ENCODE measurements at regions of chr19 and their contacts with region 1.

Region 1: DNA sequence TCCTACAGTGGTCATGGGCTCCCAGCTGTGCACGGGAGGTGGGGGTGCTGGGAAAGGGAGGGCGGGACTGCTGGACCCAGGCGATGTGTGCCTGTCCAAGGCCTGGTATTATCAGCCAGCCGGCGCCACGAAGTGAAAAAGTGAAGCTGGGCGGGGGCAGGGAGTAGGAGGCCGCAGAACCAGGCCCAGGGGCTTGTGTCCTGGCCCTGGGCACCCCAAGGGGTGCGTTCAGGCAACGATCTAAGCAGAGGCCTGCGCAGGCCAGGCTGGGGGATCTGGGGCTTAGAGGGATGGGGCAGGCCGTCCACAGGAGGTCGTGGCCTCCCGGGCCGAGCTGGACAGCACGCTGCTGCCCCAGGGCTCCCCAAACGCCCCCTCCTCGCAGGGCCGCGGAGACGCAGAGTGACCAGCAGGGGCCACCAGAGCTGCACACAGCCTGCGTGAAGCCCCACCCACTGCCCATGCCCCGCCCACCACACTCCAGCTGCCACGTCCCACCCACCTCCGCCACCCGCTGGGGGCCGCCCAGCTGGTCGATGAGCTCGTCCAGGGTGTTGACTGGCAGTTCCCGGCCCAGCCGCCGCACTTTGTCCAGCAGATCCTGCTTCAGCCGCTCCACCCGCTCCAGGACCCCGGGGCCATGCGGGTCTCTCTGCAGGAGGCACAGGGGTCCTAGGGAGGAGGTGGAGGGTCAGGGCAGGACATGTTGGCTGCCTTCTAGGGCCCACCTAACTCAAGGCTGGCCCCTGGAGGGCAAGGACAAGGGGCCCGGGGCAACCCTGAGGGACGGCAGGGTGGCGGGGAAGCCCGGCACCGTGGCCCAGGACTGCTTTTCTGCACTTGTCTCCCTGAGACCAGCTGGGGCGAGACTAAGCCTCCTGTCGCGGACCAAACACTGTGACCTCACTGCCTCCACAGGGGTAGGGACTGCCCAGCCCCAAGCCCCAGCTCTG is 9.5 kb downstream of the GPX4 start:
- DNase-seq: peak; percentile 97 to 98
- H3K4me3 ChIP-seq: peak overlapping the region in 2 of 4 donors; percentile 5 to 29
- H3K27ac ChIP-seq: peak overlapping the region; percentile 25 to 87 (median 82)
- H3K4me1 ChIP-seq: peaks cover 24 to 37% (median 30%) of the 10 kb centered on the region in 4 donors
- H3K27me3 ChIP-seq: no peaks in the 10 kb centered on the region
- CTCF ChIP-seq: peak in 5 of 7 experiments; percentile 83 to 90 (median 86)
- EP300 ChIP-seq: no peak
- POLR2A ChIP-seq: no peak

Region 2: DNA sequence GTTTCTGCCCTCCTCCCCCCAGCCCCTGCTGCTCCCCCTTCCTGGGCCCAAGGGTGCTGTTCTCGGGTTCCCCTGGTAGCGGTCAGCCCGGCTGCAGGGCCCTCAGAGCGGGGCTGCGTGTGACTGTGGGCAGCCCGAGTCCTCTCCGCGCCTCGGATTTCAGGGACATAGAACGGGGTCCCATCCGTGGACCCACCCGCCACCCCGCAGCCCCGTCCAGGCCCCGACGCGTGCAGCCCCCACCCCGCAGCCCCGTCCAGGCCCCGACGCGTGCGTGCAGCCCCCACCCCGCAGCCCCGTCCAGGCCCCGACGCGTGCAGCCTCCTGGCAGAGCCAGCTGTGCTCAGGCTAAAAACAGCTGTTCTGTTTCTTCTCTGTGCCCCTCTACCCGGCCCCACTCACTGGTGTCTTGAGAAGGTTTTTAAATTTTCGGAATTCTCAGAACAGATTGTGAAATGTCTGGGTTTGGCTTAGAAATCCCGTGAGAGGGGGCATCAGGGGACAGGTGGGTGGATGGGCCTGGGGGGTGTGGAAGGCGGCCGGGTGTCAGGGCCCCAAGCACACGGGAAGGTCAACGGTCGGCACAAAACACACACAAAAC is 278.0 kb before region 1 on chr19:
- intact Hi-C with region 1: no loop called
- DNase-seq: no peak
- H3K4me3 ChIP-seq: no peak overlapping the region
- H3K27ac ChIP-seq: no peak overlapping the region
- H3K4me1 ChIP-seq: no peaks in the 10 kb centered on the region
- H3K27me3 ChIP-seq: peaks cover 0 to 82% (median 48%) of the 10 kb centered on the region in 3 donors
- CTCF ChIP-seq: no peak
- EP300 ChIP-seq: no peak
- POLR2A ChIP-seq: no peak

Region 3: GRCh38 chr19:1172363-1173158 is 59.3 kb after region 1 on chr19:
- intact Hi-C with region 1: no loop called
- DNase-seq: peak; percentile 63 to 77
- H3K4me3 ChIP-seq: peak overlapping the region; percentile 69 to 99 (median 83)
- H3K27ac ChIP-seq: peak overlapping the region; percentile 89 to 98 (median 97)
- H3K4me1 ChIP-seq: peaks cover 44 to 71% (median 63%) of the 10 kb centered on the region in 4 donors
- H3K27me3 ChIP-seq: no peaks in the 10 kb centered on the region
- CTCF ChIP-seq: no peak
- EP300 ChIP-seq: no peak
- POLR2A ChIP-seq: no peak

Region 4: GRCh38 chr19:1183534-1184172 is 70.3 kb after region 1 on chr19:
- intact Hi-C with region 1: loop called (anchors 5 kb)
- DNase-seq: peak; percentile 76 to 82
- H3K4me3 ChIP-seq: no peak overlapping the region
- H3K27ac ChIP-seq: peak overlapping the region in 4 of 5 donors; percentile 59 to 84 (median 76)
- H3K4me1 ChIP-seq: peaks cover 14 to 56% (median 27%) of the 10 kb centered on the region in 4 donors
- H3K27me3 ChIP-seq: no peaks in the 10 kb centered on the region
- CTCF ChIP-seq: no peak
- EP300 ChIP-seq: no peak
- POLR2A ChIP-seq: no peak

Region 5: GRCh38 chr19:1205114-1206062 is 92.1 kb after region 1 on chr19 and contains the start of gene STK11:
- intact Hi-C with region 1: no loop called
- DNase-seq: peak; percentile 99 to 100
- H3K4me3 ChIP-seq: peak within 1 kb of the TSS; percentile 73 to 91 (median 80)
- H3K27ac ChIP-seq: peak within 1 kb of the TSS; percentile 77 to 90 (median 86)
- H3K4me1 ChIP-seq: peaks cover 43 to 65% (median 60%) of the 10 kb centered on the region in 4 donors
- H3K27me3 ChIP-seq: no peaks in the 10 kb centered on the region
- CTCF ChIP-seq: no peak
- EP300 ChIP-seq: no peak
- POLR2A ChIP-seq: no peak
- total RNA-seq, gene STK11: 55.1 to 368 (median 82.3) TPM

Measured in stomach (tissue), 19 donors.